Ovary (tissue), 10 donors: ENCODE measurements at regions of chr3 and their contacts with region 1.

Region 1: GRCh38 chr3:75650191-75650590 is 13.9 kb upstream of the FRG2C start:
- DNase-seq: no peak
- H3K4me3 ChIP-seq: no peak overlapping the region
- H3K27ac ChIP-seq: no peak overlapping the region
- H3K4me1 ChIP-seq: no peaks in the 10 kb centered on the region
- H3K27me3 ChIP-seq: no peaks in the 10 kb centered on the region
- CTCF ChIP-seq: no peak
- EP300 ChIP-seq: no peak
- POLR2A ChIP-seq: no peak

Region 2: GRCh38 chr3:75294124-75294523 is 356.1 kb before region 1 on chr3:
- intact Hi-C with region 1: loop called in 1 of 4 experiments (anchors 10 kb)
- DNase-seq: peak; percentile 38 to 63 (median 45)
- H3K4me3 ChIP-seq: no peak overlapping the region
- H3K27ac ChIP-seq: no peak overlapping the region
- H3K4me1 ChIP-seq: no peaks in the 10 kb centered on the region
- H3K27me3 ChIP-seq: no peaks in the 10 kb centered on the region
- CTCF ChIP-seq: peak; percentile 58 to 75 (median 62)
- EP300 ChIP-seq: no peak
- POLR2A ChIP-seq: no peak